Activated CD4-positive, alpha-beta T cell treated with anti-CD3 and anti-CD28 coated beads, Interleukin-2, amount 10 ng/mL, durations not matched to agents 24 days and 14 days (primary cell): ENCODE measurements at regions of chr1 and their contacts with region 1.

Region 1: DNA sequence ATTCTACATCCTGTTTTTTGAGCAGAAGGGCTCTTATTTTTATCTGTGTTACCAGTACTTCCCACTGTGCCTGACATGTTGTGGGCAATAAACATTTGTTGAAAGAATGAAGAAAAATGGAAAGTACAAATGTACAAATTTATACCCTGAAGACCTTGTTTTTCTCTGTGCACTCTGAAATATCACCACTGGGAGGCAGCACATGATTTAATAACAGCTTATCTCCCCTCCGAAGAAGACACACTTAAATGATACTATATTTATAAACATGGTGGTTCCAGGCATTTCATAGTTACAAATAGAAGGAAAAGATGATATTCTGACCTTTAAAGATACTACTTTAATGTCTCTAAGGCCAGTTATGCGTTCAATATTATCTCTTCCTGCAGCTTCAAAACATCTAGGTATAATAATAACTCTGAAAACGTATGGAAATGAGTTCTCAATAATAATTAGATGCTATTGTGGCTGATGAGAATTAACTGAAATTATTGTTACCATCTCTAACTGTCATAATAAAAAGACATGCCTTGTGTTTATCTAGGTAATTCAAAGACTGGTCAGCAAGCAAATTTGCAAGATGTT is 12.8 kb downstream of the DYNLT5 start:
- DNase-seq: peak; percentile 86
- H3K4me3 Mint-ChIP-seq: no peak overlapping the region
- H3K27ac Mint-ChIP-seq: no peak overlapping the region
- H3K4me1 Mint-ChIP-seq: peaks cover 16% of the 10 kb centered on the region
- H3K27me3 Mint-ChIP-seq: no peaks in the 10 kb centered on the region

Region 2: GRCh38 chr1:66552829-66553228 is 212.3 kb before region 1 on chr1:
- intact Hi-C with region 1: no loop called
- DNase-seq: no peak
- H3K4me3 Mint-ChIP-seq: no peak overlapping the region
- H3K27ac Mint-ChIP-seq: no peak overlapping the region
- H3K4me1 Mint-ChIP-seq: no peaks in the 10 kb centered on the region
- H3K27me3 Mint-ChIP-seq: peaks cover 15% of the 10 kb centered on the region

Region 3: GRCh38 chr1:66788231-66788939 is 23.3 kb after region 1 on chr1:
- intact Hi-C with region 1: loop called (anchors 1 kb)
- DNase-seq: peak; percentile 76
- H3K4me3 Mint-ChIP-seq: peak overlapping the region; percentile 60
- H3K27ac Mint-ChIP-seq: peak overlapping the region; percentile 63
- H3K4me1 Mint-ChIP-seq: peaks cover 17% of the 10 kb centered on the region
- H3K27me3 Mint-ChIP-seq: no peaks in the 10 kb centered on the region

Region 4: GRCh38 chr1:66938613-66939012 is 173.5 kb after region 1 on chr1:
- intact Hi-C with region 1: no loop called
- DNase-seq: no peak
- H3K4me3 Mint-ChIP-seq: no peak overlapping the region
- H3K27ac Mint-ChIP-seq: no peak overlapping the region
- H3K4me1 Mint-ChIP-seq: peaks cover 57% of the 10 kb centered on the region
- H3K27me3 Mint-ChIP-seq: no peaks in the 10 kb centered on the region

Region 5: GRCh38 chr1:66981679-66982078 is 216.6 kb after region 1 on chr1:
- intact Hi-C with region 1: loop called (anchors 5 kb)
- DNase-seq: peak; percentile 88
- H3K4me3 Mint-ChIP-seq: peak overlapping the region; percentile 79
- H3K27ac Mint-ChIP-seq: peak overlapping the region; percentile 35
- H3K4me1 Mint-ChIP-seq: peaks cover 27% of the 10 kb centered on the region
- H3K27me3 Mint-ChIP-seq: no peaks in the 10 kb centered on the region

Region 6: DNA sequence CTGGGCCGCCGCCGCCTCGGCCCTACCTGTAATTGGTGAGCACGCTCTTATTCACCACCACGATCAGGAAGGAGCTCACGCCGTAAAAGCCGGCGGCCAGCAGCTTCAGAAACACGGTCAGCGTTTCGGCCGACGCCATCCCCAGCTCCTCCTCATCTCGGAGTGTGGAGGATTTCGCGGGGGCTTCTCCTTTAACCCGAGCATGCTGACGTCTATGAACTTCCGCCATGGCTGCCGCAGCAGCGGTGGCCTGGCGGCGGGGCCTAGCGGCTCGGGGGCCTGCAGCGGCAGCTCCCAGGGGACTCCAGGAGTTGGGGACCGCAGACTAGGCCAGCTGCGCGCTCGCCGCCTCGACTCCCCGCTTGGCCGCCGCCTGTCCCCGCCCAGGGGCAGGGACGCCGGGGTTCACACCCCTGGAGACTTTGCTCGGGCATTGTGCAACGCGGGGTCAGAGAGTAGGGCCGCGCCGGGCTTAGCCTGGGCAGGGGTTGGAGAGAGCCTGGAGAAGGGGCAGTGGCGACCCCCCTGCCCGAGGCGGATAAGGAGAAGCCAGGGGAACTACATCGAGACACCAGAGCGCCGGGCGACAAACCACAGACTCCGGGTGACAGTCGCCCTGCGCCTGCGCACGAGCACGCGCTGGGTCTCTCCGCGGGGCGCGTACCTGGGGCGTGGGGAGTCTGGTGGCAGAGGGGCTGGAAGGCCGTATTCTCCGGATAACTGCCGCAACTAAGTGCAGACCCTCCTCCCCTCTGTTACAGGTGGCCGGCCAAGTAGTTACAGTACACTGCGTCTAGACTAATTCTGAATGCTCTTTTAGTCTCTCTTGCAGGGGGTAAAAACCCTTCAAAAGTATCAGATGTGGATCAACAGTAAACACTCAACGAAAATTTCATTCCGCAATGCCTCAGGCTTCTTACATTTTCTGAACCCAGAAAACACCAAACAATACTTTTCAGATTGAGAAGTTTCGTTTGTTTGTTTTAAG is 289.0 kb after region 1 on chr1 and contains the start of gene SLC35D1:
- intact Hi-C with region 1: loop called (anchors 5 kb)
- DNase-seq: peak; percentile 94
- H3K4me3 Mint-ChIP-seq: peak within 1 kb of the TSS; percentile 86
- H3K27ac Mint-ChIP-seq: peak within 1 kb of the TSS; percentile 95
- H3K4me1 Mint-ChIP-seq: peaks cover 28% of the 10 kb centered on the region
- H3K27me3 Mint-ChIP-seq: peaks cover 10% of the 10 kb centered on the region
- total RNA-seq, gene SLC35D1: 15.9 and 16.1 TPM in 2 replicates

Region 7: GRCh38 chr1:67372136-67372535 is 607.0 kb after region 1 on chr1:
- intact Hi-C with region 1: no loop called
- DNase-seq: no peak
- H3K4me3 Mint-ChIP-seq: no peak overlapping the region
- H3K27ac Mint-ChIP-seq: peak overlapping the region; percentile 14
- H3K4me1 Mint-ChIP-seq: peaks cover 12% of the 10 kb centered on the region
- H3K27me3 Mint-ChIP-seq: no peaks in the 10 kb centered on the region

Region 8: GRCh38 chr1:67500413-67500959 is 735.4 kb after region 1 on chr1:
- intact Hi-C with region 1: loop called (anchors 10 kb)
- DNase-seq: peak; percentile 96
- H3K4me3 Mint-ChIP-seq: peak overlapping the region; percentile 53
- H3K27ac Mint-ChIP-seq: no peak overlapping the region
- H3K4me1 Mint-ChIP-seq: peaks cover 8% of the 10 kb centered on the region
- H3K27me3 Mint-ChIP-seq: peaks cover 8% of the 10 kb centered on the region